ENCODE measurements at regions of chr9 and their contacts with region 1.

Region 1: DNA sequence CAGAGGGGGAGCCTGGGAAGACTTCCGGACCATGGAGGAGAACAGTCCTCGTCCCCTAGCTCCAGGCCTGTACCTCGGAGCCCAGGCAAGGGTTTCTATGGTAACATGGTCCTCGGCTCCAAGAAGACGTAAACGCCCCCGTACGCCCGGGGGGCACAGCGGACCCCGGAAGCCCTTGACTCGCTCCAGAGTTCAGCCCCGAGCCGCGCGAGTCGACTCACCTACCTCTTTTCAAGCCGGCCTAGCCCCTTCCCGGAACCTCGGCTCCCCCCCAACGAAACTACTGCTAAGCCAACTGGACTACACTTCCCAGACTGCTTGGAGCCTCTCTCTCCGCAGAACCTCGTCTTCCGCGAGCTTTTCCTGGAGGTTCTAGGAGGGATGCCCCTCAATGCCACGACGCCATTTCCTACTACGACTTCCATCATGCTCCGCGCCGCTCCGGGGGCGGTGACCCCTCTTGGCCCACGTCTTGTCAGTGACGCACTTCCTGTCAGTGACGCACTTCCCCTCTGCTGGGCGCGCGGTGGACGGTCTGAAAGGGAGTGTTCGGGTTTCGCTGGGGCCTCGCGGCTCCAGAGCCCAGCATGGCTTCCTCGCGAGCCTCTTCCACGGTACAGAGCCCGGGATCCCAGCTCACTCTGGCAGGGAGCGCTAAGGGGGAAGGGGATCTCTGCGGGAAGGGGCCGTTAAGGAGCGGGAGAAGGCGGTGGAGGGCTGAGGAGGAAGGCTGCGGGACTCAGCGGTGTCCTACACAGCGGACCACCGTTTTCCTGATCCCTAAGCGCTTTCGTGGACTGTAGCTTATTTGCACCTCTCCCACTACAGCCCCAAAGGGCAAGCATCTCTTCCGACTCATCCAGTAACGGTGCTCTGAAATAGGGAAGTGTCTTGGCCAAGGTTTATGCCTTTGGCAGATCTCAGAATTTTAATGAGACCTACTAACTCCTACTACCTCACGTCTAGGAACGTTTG is at the starts of genes CDC26 and PRPF4:
- DNase-seq: peak; percentile 85 to 95 (median 93)
- ATAC-seq: peak; percentile 97
- H3K4me3 ChIP-seq: peak within 1 kb of the TSS; percentile 87
- H3K4me3 Mint-ChIP-seq: no peak within 1 kb of the TSS
- H3K27ac ChIP-seq: peak within 1 kb of the TSS; percentile 98
- H3K27ac Mint-ChIP-seq: no peak within 1 kb of the TSS
- H3K4me1 ChIP-seq: peaks cover 8 to 16% of the 10 kb centered on the region in 2 donors
- H3K4me1 Mint-ChIP-seq: peaks cover 13 to 42% (median 34%) of the 10 kb centered on the region in 7 donors
- H3K27me3 ChIP-seq: no peaks in the 10 kb centered on the region
- H3K27me3 Mint-ChIP-seq: no peaks in the 10 kb centered on the region
- total RNA-seq, gene CDC26: 21.7 to 40.3 (median 34.4) TPM
- total RNA-seq, gene PRPF4: 17.4 to 36.9 (median 22.0) TPM

Region 2: DNA sequence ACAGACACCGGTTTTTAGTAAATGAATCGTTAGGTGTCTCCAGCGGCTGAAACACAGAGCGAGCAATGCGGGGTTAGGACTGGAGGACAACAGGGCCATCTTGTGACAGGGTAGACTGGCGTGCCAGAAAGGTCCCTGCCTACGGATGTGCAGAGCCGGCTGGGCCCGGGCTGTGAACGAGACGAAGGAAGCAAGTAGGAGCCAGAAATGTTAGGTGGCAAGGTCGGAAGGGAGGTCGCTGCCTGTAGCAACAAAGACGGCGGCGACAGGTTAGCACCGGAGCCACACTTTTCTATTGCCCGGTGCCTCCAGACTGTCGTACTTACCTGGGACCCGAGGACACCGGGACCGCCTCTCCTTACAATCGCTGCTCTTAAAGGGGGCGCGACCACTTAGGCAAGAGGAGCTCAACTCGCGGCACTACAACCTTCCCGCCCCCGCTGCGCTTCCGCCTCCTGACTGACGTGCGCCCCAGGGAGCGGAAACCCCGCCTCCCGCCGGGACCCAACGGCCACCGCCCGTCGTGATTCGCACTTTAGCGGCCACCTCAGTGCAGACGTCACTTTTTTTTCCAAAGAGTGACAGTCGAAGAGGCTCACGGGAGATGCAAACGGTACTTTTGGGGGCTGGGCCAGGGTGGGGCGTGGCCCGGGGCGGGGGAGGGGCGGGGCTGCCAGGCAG is 557.6 kb before region 1 on chr9 and contains the start of gene INIP:
- CTCF ChIA-PET with region 1: no interaction called
- POLR2A ChIA-PET with region 1: no interaction called
- intact Hi-C with region 1: loop called in 1 of 2 experiments (anchors 1 kb)
- DNase-seq: peak; percentile 91 to 99 (median 98)
- ATAC-seq: peak; percentile 94
- H3K4me3 ChIP-seq: peak within 1 kb of the TSS; percentile 82
- H3K4me3 Mint-ChIP-seq: peak within 1 kb of the TSS; percentile 83 to 100 (median 96)
- H3K27ac ChIP-seq: peak within 1 kb of the TSS; percentile 96
- H3K27ac Mint-ChIP-seq: peak within 1 kb of the TSS; percentile 96 to 100 (median 99)
- H3K4me1 ChIP-seq: peaks cover 10% of the 10 kb centered on the region in 2 donors
- H3K4me1 Mint-ChIP-seq: peaks cover 14 to 39% (median 28%) of the 10 kb centered on the region in 7 donors
- H3K27me3 ChIP-seq: no peaks in the 10 kb centered on the region
- H3K27me3 Mint-ChIP-seq: no peaks in the 10 kb centered on the region
- total RNA-seq, gene INIP: 13.8 to 35.0 (median 28.3) TPM

Region 3: DNA sequence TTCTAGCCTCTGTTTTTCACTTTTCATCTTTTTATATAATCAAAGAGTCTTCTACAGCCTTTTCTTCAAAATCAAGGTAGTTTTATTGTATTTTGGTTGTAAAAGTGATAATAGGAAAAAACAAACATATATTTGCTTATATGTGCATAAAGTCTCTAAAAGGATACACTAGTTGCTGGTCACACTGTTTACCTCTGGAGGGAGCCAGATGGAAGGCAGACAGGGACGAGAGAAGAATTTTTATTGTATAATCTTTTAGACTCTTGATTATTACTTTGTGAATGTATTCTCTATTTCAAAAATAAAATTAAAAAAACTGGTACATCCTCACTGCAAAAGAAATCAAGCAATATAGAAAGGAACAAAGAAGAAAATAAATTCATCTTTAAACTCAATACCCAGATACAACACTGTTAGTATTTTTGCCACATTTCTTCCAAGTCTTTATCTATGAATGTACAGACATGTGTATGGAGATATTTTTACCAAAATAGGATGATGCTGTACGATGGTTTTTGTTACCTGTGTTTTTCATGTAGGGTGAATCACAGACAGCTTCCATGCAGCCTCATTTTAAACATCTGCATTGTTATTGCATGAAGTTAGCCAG is 33.9 kb after region 1 on chr9:
- CTCF ChIA-PET with region 1: no interaction called
- POLR2A ChIA-PET with region 1: no interaction called
- intact Hi-C with region 1: loop called in 1 of 2 experiments (anchors 1 kb)
- DNase-seq: peak in 5 of 9 donors; percentile 19 to 45 (median 33)
- ATAC-seq: peak; percentile 57
- H3K4me3 ChIP-seq: no peak overlapping the region
- H3K4me3 Mint-ChIP-seq: no peak overlapping the region
- H3K27ac ChIP-seq: no peak overlapping the region
- H3K27ac Mint-ChIP-seq: no peak overlapping the region
- H3K4me1 ChIP-seq: no peaks in the 10 kb centered on the region
- H3K4me1 Mint-ChIP-seq: no peaks in the 10 kb centered on the region
- H3K27me3 ChIP-seq: no peaks in the 10 kb centered on the region
- H3K27me3 Mint-ChIP-seq: peaks cover 0 to 7% (median 0%) of the 10 kb centered on the region in 5 donors

Region 4: GRCh38 chr9:113376634-113377567 is 101.5 kb after region 1 on chr9 and contains the start of gene HDHD3:
- CTCF ChIA-PET with region 1: no interaction called
- POLR2A ChIA-PET with region 1: no interaction called
- intact Hi-C with region 1: loop called (anchors 1 kb)
- DNase-seq: peak; percentile 70 to 84 (median 81)
- ATAC-seq: peak; percentile 96
- H3K4me3 ChIP-seq: peak within 1 kb of the TSS; percentile 81
- H3K4me3 Mint-ChIP-seq: peak within 1 kb of the TSS; percentile 82 to 98 (median 90)
- H3K27ac ChIP-seq: peak within 1 kb of the TSS; percentile 94
- H3K27ac Mint-ChIP-seq: peak within 1 kb of the TSS; percentile 68 to 97 (median 85)
- H3K4me1 ChIP-seq: peaks cover 0 to 7% of the 10 kb centered on the region in 2 donors
- H3K4me1 Mint-ChIP-seq: peaks cover 14 to 17% (median 16%) of the 10 kb centered on the region in 7 donors
- H3K27me3 ChIP-seq: no peaks in the 10 kb centered on the region
- H3K27me3 Mint-ChIP-seq: peaks cover 0 to 3% (median 0%) of the 10 kb centered on the region in 5 donors
- total RNA-seq, gene HDHD3: 11.3 to 32.2 (median 20.5) TPM

Region 5: GRCh38 chr9:113578882-113579282 is 303.4 kb after region 1 on chr9:
- CTCF ChIA-PET with region 1: interaction called, 5 read pairs
- POLR2A ChIA-PET with region 1: interaction called, 8 read pairs
- intact Hi-C with region 1: loop called (anchors 1 kb)
- DNase-seq: peak; percentile 39 to 86 (median 66)
- ATAC-seq: peak; percentile 75
- H3K4me3 ChIP-seq: peak overlapping the region; percentile 37
- H3K4me3 Mint-ChIP-seq: peak overlapping the region; percentile 70 to 95 (median 82)
- H3K27ac ChIP-seq: peak overlapping the region; percentile 77
- H3K27ac Mint-ChIP-seq: peak overlapping the region; percentile 92 to 98 (median 96)
- H3K4me1 ChIP-seq: peaks cover 49 to 50% of the 10 kb centered on the region in 2 donors
- H3K4me1 Mint-ChIP-seq: peaks cover 53 to 85% (median 75%) of the 10 kb centered on the region in 7 donors
- H3K27me3 ChIP-seq: no peaks in the 10 kb centered on the region
- H3K27me3 Mint-ChIP-seq: no peaks in the 10 kb centered on the region

Region 6: DNA sequence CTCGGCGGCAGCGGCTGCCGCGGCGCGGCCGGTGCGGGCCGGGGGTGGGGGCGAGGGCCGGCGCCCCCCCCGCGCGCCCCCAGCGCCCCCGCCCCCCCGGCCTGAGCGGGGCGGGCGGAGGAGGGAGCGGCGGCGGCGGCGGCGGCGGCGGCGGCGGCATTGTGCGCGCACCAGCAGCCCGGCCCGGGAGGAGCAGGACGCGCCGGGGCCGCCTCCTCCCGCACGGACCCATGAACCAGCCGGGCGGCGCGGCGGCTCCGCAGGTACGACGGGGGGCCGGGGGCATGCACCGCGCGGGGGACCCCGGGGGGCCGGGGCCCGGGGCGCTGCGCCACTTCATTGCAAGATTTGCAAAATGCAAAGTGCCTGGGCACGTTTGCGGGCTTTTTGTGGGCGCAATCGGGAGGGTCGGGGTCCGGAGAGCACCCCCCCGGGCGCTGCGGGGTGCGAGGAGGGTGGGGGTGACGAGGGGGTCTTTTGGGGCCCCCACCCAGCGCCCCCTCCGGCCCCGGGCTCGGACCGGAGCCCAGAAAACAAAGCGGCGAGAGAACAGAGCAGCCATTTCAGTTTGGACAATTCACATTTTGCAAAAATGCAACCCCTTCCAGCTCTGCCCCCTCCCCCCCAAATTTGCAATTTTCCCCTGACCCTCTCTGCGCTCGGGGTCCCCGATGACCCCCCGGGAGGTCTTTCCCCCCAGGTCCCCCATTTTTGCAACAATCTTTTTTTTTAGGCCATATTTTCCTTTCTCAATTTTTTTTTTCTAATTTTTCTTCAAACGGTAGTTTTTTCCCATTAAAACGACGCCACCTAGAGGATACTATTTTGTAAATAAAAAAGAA is 600.9 kb after region 1 on chr9 and contains the start of gene ZNF618:
- CTCF ChIA-PET with region 1: no interaction called
- POLR2A ChIA-PET with region 1: no interaction called
- intact Hi-C with region 1: loop called in 1 of 2 experiments (anchors 5 kb)
- DNase-seq: peak in 5 of 9 donors; percentile 8 to 41 (median 20)
- ATAC-seq: peak; percentile 73
- H3K4me3 ChIP-seq: peak within 1 kb of the TSS; percentile 52
- H3K4me3 Mint-ChIP-seq: peak within 1 kb of the TSS; percentile 81 to 98 (median 94)
- H3K27ac ChIP-seq: no peak within 1 kb of the TSS
- H3K27ac Mint-ChIP-seq: peak within 1 kb of the TSS in 4 of 9 donors; percentile 25 to 73 (median 66)
- H3K4me1 ChIP-seq: peaks cover 0 to 4% of the 10 kb centered on the region in 2 donors
- H3K4me1 Mint-ChIP-seq: peaks cover 3 to 10% (median 7%) of the 10 kb centered on the region in 7 donors
- H3K27me3 ChIP-seq: no peaks in the 10 kb centered on the region
- H3K27me3 Mint-ChIP-seq: peaks cover 12 to 50% (median 34%) of the 10 kb centered on the region in 5 donors
- total RNA-seq, gene ZNF618: 0.24 to 3.3 (median 1.2) TPM

Measured in naive thymus-derived CD4-positive, alpha-beta T cell (primary cell).